ENCODE measurements at regions of chr1 and their contacts with region 1.

Region 1: GRCh38 chr1:214123061-214123784 is 135.4 kb downstream of the PROX1 start:
- DNase-seq: peak; percentile 86
- ATAC-seq: peak; percentile 91
- H3K4me3 ChIP-seq: no peak overlapping the region
- H3K27ac ChIP-seq: peak overlapping the region; percentile 49
- H3K4me1 ChIP-seq: peaks cover 62% of the 10 kb centered on the region
- H3K27me3 ChIP-seq: no peaks in the 10 kb centered on the region
- CTCF ChIP-seq: peak; percentile 92
- EP300 ChIP-seq: peak in 1 of 2 experiments; percentile 42; a peak in 1 of 4 replicates
- POLR2A ChIP-seq: no peak
- RAD21 ChIP-seq: peak; percentile 94

Region 2: GRCh38 chr1:213244664-213245091 is 878.5 kb before region 1 on chr1:
- CTCF ChIA-PET with region 1: no interaction called
- POLR2A ChIA-PET with region 1: no interaction called
- in situ Hi-C with region 1: loop called (anchors 10 kb)
- intact Hi-C with region 1: loop called (anchors 1 kb)
- DNase-seq: peak; percentile 73
- ATAC-seq: peak; percentile 54
- H3K4me3 ChIP-seq: no peak overlapping the region
- H3K27ac ChIP-seq: no peak overlapping the region
- H3K4me1 ChIP-seq: peaks cover 19% of the 10 kb centered on the region
- H3K27me3 ChIP-seq: no peaks in the 10 kb centered on the region
- CTCF ChIP-seq: peak; percentile 79
- EP300 ChIP-seq: no peak
- POLR2A ChIP-seq: no peak
- RAD21 ChIP-seq: peak; percentile 82

Region 3: GRCh38 chr1:213793482-213794067 is 329.6 kb before region 1 on chr1:
- CTCF ChIA-PET with region 1: no interaction called
- POLR2A ChIA-PET with region 1: no interaction called
- in situ Hi-C with region 1: no loop called
- intact Hi-C with region 1: loop called (anchors 2 kb)
- DNase-seq: peak; percentile 93
- ATAC-seq: peak; percentile 95
- H3K4me3 ChIP-seq: peak overlapping the region in 1 of 3 experiments; percentile 15; a peak in 1 of 6 replicates
- H3K27ac ChIP-seq: peak overlapping the region; percentile 74
- H3K4me1 ChIP-seq: peaks cover 70% of the 10 kb centered on the region
- H3K27me3 ChIP-seq: no peaks in the 10 kb centered on the region
- CTCF ChIP-seq: no peak
- EP300 ChIP-seq: peak in 1 of 2 experiments; percentile 82; a peak in 2 of 4 replicates
- POLR2A ChIP-seq: no peak
- RAD21 ChIP-seq: 0 out of 2 replicates have a peak, but pooled peaks have one; percentile 23

Region 4: GRCh38 chr1:214008791-214009620 is 114.2 kb before region 1 on chr1:
- CTCF ChIA-PET with region 1: interaction called, 3 read pairs
- POLR2A ChIA-PET with region 1: interaction called, 3 read pairs
- in situ Hi-C with region 1: loop called (anchors 25 kb)
- intact Hi-C with region 1: loop called (anchors 5 kb)
- DNase-seq: no peak
- ATAC-seq: no peak
- H3K4me3 ChIP-seq: no peak overlapping the region
- H3K27ac ChIP-seq: no peak overlapping the region
- H3K4me1 ChIP-seq: peaks cover 26% of the 10 kb centered on the region
- H3K27me3 ChIP-seq: no peaks in the 10 kb centered on the region
- CTCF ChIP-seq: no peak
- EP300 ChIP-seq: no peak
- POLR2A ChIP-seq: no peak
- RAD21 ChIP-seq: no peak

Region 5: GRCh38 chr1:214044438-214045214 is 78.6 kb before region 1 on chr1:
- CTCF ChIA-PET with region 1: no interaction called
- POLR2A ChIA-PET with region 1: interaction called, 38 read pairs
- in situ Hi-C with region 1: no loop called
- intact Hi-C with region 1: no loop called
- DNase-seq: peak; percentile 81
- ATAC-seq: peak; percentile 91
- H3K4me3 ChIP-seq: no peak overlapping the region; a peak in 1 of 6 replicates
- H3K27ac ChIP-seq: peak overlapping the region; percentile 79
- H3K4me1 ChIP-seq: peaks cover 79% of the 10 kb centered on the region
- H3K27me3 ChIP-seq: no peaks in the 10 kb centered on the region; a peak in 1 of 5 replicates
- CTCF ChIP-seq: no peak
- EP300 ChIP-seq: peak; percentile 42 to 87
- POLR2A ChIP-seq: no peak
- RAD21 ChIP-seq: no peak

Region 6: GRCh38 chr1:214146523-214146922 is 23.3 kb after region 1 on chr1:
- CTCF ChIA-PET with region 1: no interaction called
- POLR2A ChIA-PET with region 1: no interaction called
- in situ Hi-C with region 1: no loop called
- intact Hi-C with region 1: no loop called
- DNase-seq: peak; percentile 43
- ATAC-seq: peak; percentile 85
- H3K4me3 ChIP-seq: no peak overlapping the region
- H3K27ac ChIP-seq: no peak overlapping the region
- H3K4me1 ChIP-seq: no peaks in the 10 kb centered on the region; the same call in 1 of the 2 replicates
- H3K27me3 ChIP-seq: peaks cover 0 to 9% of the 10 kb centered on the region in 2 experiments; a peak in 3 of 5 replicates
- CTCF ChIP-seq: no peak
- EP300 ChIP-seq: no peak
- POLR2A ChIP-seq: no peak
- RAD21 ChIP-seq: no peak

Region 7: DNA sequence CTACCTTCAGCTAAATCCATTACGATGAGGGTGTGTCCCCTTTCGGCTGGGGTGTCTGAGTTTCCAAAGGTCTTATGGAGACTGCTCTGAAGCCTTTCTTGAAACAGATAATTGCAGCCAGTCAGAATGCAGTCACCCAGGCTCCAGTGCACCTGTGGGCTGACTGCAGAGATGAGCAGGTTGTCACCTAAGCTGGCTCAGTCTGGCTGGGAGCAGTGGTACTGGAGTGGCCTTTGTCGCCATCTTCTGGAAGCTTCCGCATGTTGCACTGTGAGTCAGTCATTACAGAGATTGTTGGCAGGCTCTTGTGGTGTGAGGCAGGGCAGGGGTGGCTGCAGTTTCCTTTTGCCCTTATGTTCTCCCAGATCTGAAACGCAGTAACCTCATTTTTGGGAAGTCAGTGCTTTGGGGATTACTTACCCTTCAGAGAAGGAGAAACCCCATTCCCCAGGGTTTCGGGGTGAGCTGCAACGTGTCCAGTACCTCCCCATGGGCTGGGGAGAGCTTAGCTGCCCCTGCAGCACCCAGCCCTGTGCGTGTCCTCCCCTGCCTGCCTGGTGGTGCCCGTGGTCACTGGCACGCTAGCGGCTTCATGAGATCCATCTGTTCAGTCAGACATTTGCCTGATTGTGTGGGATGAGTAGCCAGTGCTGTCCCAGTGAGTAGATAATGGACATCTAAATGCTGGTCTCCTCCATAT is 205.7 kb after region 1 on chr1:
- CTCF ChIA-PET with region 1: no interaction called
- POLR2A ChIA-PET with region 1: no interaction called
- in situ Hi-C with region 1: no loop called
- intact Hi-C with region 1: loop called (anchors 1 kb)
- DNase-seq: peak; percentile 65
- ATAC-seq: peak; percentile 91
- H3K4me3 ChIP-seq: no peak overlapping the region
- H3K27ac ChIP-seq: no peak overlapping the region
- H3K4me1 ChIP-seq: no peaks in the 10 kb centered on the region
- H3K27me3 ChIP-seq: no peaks in the 10 kb centered on the region
- CTCF ChIP-seq: peak; percentile 95
- EP300 ChIP-seq: no peak
- POLR2A ChIP-seq: no peak
- RAD21 ChIP-seq: peak; percentile 96